ENCODE measurements at regions of chr3 and their contacts with region 1.

Region 1: DNA sequence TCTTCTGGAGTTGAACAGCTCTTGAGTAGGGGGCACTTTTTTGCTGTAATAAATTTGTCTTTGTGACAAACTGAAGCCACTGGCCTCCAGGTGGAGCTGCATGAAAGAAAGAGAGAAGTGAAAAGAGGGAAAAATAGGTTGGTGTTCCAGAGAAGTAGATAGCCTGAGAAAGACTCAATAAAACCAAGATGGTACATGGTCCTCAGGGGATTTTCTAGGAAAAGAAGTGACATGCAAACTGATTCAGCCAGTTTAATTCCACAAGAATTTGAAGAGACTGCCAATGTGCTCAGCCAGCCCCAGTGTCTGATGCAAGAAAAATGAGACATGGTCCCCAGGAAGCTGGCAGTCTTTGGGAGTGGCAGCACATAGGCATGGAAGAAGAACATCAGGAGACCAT is 152.7 kb downstream of the CD47 start:
- DNase-seq: peak; percentile 70
- H3K4me3 ChIP-seq: no peak overlapping the region
- H3K27ac ChIP-seq: no peak overlapping the region
- H3K4me1 ChIP-seq: peaks cover 13% of the 10 kb centered on the region
- H3K27me3 ChIP-seq: no peaks in the 10 kb centered on the region
- CTCF ChIP-seq: peak; percentile 28 to 55
- POLR2A ChIP-seq: no peak

Region 2: GRCh38 chr3:107904536-107905066 is 33.5 kb before region 1 on chr3:
- CTCF ChIA-PET with region 1: no interaction called
- POLR2A ChIA-PET with region 1: no interaction called
- dilution Hi-C with region 1: no loop called
- intact Hi-C with region 1: no loop called
- DNase-seq: no peak
- H3K4me3 ChIP-seq: no peak overlapping the region
- H3K27ac ChIP-seq: no peak overlapping the region
- H3K4me1 ChIP-seq: no peaks in the 10 kb centered on the region
- H3K27me3 ChIP-seq: peaks cover 3 to 10% of the 10 kb centered on the region in 2 experiments
- CTCF ChIP-seq: no peak
- POLR2A ChIP-seq: no peak

Region 3: DNA sequence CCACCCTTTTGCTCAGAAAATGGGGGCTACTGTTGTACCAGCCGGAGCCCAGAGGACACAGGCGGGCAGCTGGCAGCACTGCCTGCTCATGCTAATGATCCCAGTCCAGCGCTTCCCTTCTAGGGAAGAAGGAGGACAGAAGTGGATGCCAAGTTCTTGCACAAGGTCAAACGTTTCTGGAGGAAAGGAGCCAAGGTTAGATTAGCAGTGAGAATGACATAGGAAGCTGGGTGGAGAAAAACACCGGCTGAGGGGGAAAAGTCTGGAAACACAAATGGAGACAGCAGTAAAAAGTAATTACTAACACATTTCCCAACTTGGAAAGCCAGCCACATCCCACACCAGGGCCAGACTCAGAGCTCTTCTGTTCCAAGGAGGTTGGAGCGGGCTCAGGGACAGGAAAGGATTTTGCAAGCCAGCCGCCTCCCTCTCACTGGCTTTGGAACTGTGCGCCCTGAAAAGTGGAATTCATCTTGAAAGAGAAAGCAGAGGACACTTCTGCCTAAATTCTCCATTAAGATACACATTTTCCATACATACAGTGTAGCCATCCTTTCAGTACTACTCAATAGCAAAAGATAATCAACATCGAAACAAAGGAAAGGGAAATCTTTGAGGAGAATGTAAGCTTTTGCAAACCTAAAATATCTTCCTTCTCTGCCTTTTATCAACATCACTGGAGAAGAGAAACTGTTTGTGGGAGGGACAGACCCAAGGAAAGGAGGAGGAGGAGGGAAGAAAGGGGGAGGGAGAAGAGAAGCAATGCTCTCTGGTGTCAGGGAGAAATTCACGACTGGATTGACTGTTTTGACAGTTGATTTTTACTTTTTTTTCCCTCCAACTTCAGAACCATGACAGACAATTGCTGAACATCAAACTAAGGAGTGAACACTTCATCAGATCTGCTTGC is 19.1 kb after region 1 on chr3:
- CTCF ChIA-PET with region 1: interaction called, 13 read pairs
- POLR2A ChIA-PET with region 1: no interaction called
- dilution Hi-C with region 1: no loop called
- intact Hi-C with region 1: no loop called
- DNase-seq: peak; percentile 81
- H3K4me3 ChIP-seq: no peak overlapping the region
- H3K27ac ChIP-seq: no peak overlapping the region
- H3K4me1 ChIP-seq: peaks cover 30% of the 10 kb centered on the region
- H3K27me3 ChIP-seq: no peaks in the 10 kb centered on the region
- CTCF ChIP-seq: no peak
- POLR2A ChIP-seq: no peak

Region 4: GRCh38 chr3:108117241-108117775 is 179.2 kb after region 1 on chr3:
- CTCF ChIA-PET with region 1: no interaction called
- POLR2A ChIA-PET with region 1: no interaction called
- dilution Hi-C with region 1: no loop called
- intact Hi-C with region 1: no loop called
- DNase-seq: no peak
- H3K4me3 ChIP-seq: no peak overlapping the region
- H3K27ac ChIP-seq: no peak overlapping the region
- H3K4me1 ChIP-seq: no peaks in the 10 kb centered on the region
- H3K27me3 ChIP-seq: peaks cover 0 to 5% of the 10 kb centered on the region in 2 experiments
- CTCF ChIP-seq: no peak
- POLR2A ChIP-seq: no peak

Region 5: GRCh38 chr3:108159865-108160264 is 221.7 kb after region 1 on chr3:
- CTCF ChIA-PET with region 1: interaction called, 4 read pairs
- POLR2A ChIA-PET with region 1: no interaction called
- dilution Hi-C with region 1: no loop called
- intact Hi-C with region 1: loop called (anchors 5 kb)
- DNase-seq: peak; percentile 49
- H3K4me3 ChIP-seq: no peak overlapping the region
- H3K27ac ChIP-seq: no peak overlapping the region
- H3K4me1 ChIP-seq: peaks cover 26% of the 10 kb centered on the region
- H3K27me3 ChIP-seq: no peaks in the 10 kb centered on the region
- CTCF ChIP-seq: no peak
- POLR2A ChIP-seq: no peak

Region 6: GRCh38 chr3:108221911-108222852 is 284.0 kb after region 1 on chr3 and contains the start of gene IFT57:
- CTCF ChIA-PET with region 1: interaction called, 11 read pairs
- POLR2A ChIA-PET with region 1: no interaction called
- dilution Hi-C with region 1: no loop called
- intact Hi-C with region 1: no loop called
- DNase-seq: peak; percentile 99
- H3K4me3 ChIP-seq: peak within 1 kb of the TSS; percentile 66 to 87 (median 82)
- H3K27ac ChIP-seq: peak within 1 kb of the TSS; percentile 68
- H3K4me1 ChIP-seq: peaks cover 21% of the 10 kb centered on the region
- H3K27me3 ChIP-seq: no peaks in the 10 kb centered on the region
- CTCF ChIP-seq: no peak
- POLR2A ChIP-seq: peak; percentile 36
- total RNA-seq, gene IFT57: 23.4 and 25.1 TPM in 2 replicates

Region 7: DNA sequence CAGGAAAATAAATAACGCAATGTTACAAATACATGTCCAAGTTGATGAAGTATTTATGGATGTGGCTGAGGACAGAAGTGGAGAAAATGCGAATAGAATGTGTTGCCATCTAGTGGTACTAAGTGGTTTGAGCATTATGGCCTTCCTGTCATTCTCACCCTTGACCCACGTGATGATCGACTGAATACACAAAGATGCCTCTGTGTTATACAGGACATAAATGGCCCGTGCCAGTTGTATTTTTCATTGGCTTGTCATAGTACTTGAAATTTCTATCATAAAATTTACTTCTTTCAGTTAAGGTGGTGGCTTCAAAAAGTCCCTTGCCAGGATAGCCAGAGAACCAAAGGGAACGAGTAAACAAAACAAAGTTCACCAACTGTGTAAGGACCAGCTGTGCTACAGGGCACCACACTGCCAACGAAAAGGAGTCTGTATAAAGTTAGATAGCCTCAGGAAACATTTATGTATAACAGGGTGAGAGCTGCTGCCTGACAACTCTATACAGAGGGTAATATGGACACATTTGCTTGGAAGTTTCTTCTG is 468.6 kb after region 1 on chr3:
- CTCF ChIA-PET with region 1: interaction called, 30 read pairs
- POLR2A ChIA-PET with region 1: no interaction called
- dilution Hi-C with region 1: no loop called
- intact Hi-C with region 1: loop called (anchors 1 kb)
- DNase-seq: peak; percentile 60
- H3K4me3 ChIP-seq: no peak overlapping the region
- H3K27ac ChIP-seq: no peak overlapping the region
- H3K4me1 ChIP-seq: no peaks in the 10 kb centered on the region
- H3K27me3 ChIP-seq: no peaks in the 10 kb centered on the region
- CTCF ChIP-seq: peak; percentile 48 to 52
- POLR2A ChIP-seq: no peak

Measured in endothelial cell of umbilical vein (primary cell).